Left cardiac atrium (tissue), 4 donors: ENCODE measurements at regions of chr11 and their contacts with region 1.

Region 1: DNA sequence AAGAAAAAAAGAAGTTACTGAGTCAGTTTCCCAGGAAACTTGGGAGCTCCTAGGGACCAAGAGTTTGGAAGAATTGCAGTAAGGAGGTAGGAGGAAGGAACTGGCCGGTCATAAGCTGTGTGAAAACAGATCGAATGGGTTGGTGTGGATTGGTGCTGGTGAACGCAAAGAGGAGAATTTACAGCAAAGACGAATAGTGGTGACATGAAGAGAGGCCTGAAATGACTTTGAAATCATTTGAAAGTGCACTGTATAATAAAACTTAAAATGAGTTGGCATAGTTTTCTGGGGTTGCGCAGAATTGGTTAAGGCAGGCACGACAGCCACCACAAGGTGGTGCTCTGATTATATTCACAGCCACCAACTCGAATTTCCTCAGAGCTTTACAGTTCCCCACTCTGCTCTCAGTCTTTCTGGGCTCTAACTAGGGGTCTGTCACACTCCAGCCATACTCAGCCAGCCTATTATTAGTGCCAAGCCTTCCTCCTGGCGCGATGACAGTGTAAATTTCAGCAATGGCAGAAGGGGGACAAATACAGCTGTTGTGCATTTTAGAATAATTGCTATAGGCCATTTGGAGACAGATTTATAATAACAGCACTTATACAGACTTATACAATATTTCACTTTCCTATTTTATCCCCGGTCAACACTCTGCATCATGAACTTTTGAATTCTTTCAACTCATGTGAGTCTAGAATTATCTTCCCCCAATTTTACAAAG is 8.3 kb upstream of the HTR3B start:
- DNase-seq: peak; percentile 35
- ATAC-seq: peak; percentile 76 to 84

Region 2: GRCh38 chr11:113974741-113975470 is 78.6 kb after region 1 on chr11 and contains the start of gene HTR3A:
- intact Hi-C with region 1: loop called in 1 of 2 experiments (anchors 10 kb)
- DNase-seq: peak; percentile 79
- ATAC-seq: peak; percentile 94 to 95
- total RNA-seq, gene HTR3A: 0.18 TPM in 1 of 2 donors, not detected in the other

Region 3: GRCh38 chr11:113994077-113994954 is 98.0 kb after region 1 on chr11:
- intact Hi-C with region 1: loop called in 1 of 2 experiments (anchors 10 kb)
- DNase-seq: no peak
- ATAC-seq: no peak